Activated B cell treated with CpG ODN at 0.5 μM for 24 hours (primary cell): ENCODE measurements at regions of chr5 and their contacts with region 1.

Region 1: GRCh38 chr5:94740286-94740685 is 121.8 kb downstream of the SLF1 start:
- DNase-seq: no peak
- ATAC-seq: no peak
- H3K4me3 Mint-ChIP-seq: no peak overlapping the region
- H3K27ac Mint-ChIP-seq: no peak overlapping the region
- H3K4me1 Mint-ChIP-seq: peaks cover 7% of the 10 kb centered on the region
- H3K27me3 Mint-ChIP-seq: no peaks in the 10 kb centered on the region
- CTCF ChIP-seq: no peak

Region 2: DNA sequence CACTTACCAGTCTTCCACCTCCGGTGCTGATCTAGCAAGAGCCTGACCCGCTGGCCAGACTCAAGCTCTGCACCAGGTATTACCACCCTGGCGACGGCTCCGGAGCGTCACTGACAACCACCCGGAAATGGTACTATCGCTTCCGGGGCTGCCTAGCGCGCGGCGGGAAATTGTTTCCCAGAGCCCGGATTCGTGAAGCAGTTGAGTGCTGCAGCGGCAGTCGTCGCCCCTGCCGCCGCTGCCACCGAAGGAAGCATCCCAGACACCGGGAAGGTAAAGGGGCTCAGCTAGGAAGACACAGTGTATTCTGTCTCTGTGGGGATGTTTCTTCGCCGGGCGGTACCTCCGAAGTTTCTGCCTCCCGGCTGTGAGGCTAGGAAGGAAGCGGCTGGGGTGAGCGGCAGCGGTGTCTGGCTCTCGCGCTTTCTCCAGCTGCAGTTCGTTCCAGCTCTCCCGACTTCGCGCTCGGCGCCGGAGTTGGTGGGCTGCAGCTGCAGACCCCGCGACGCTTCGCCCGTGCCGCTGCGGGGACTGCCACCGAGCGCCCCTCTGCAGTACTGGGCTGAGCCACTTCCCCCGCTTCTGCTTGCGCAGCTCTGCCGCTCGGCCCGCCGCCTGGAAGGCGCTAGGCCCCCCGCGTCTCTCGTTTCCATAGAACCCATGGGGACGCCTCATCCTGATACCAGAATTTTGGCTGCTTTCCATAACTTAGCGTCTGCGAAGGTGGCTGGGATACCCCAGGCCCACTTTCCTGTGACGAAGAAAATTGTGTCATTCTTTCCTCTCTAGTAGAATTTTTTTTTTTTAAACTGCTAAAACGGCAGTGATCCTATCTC is 121.6 kb before region 1 on chr5 and contains the starts of genes KIAA0825 and SLF1:
- CTCF ChIA-PET with region 1: interaction called, 17 read pairs
- POLR2A ChIA-PET with region 1: no interaction called
- intact Hi-C with region 1: loop called (anchors 1 kb)
- DNase-seq: peak; percentile 70
- ATAC-seq: peak; percentile 94
- H3K4me3 Mint-ChIP-seq: peak within 1 kb of the TSS; percentile 96
- H3K27ac Mint-ChIP-seq: peak within 1 kb of the TSS; percentile 82
- H3K4me1 Mint-ChIP-seq: peaks cover 22% of the 10 kb centered on the region
- H3K27me3 Mint-ChIP-seq: no peaks in the 10 kb centered on the region
- CTCF ChIP-seq: no peak
- total RNA-seq, gene KIAA0825: 1.4 and 2.3 TPM in 2 replicates
- total RNA-seq, gene SLF1: 7.3 and 12.0 TPM in 2 replicates